Naive thymus-derived CD4-positive, alpha-beta T cell (primary cell): ENCODE measurements at regions of chr2 and their contacts with region 1.

Region 1: DNA sequence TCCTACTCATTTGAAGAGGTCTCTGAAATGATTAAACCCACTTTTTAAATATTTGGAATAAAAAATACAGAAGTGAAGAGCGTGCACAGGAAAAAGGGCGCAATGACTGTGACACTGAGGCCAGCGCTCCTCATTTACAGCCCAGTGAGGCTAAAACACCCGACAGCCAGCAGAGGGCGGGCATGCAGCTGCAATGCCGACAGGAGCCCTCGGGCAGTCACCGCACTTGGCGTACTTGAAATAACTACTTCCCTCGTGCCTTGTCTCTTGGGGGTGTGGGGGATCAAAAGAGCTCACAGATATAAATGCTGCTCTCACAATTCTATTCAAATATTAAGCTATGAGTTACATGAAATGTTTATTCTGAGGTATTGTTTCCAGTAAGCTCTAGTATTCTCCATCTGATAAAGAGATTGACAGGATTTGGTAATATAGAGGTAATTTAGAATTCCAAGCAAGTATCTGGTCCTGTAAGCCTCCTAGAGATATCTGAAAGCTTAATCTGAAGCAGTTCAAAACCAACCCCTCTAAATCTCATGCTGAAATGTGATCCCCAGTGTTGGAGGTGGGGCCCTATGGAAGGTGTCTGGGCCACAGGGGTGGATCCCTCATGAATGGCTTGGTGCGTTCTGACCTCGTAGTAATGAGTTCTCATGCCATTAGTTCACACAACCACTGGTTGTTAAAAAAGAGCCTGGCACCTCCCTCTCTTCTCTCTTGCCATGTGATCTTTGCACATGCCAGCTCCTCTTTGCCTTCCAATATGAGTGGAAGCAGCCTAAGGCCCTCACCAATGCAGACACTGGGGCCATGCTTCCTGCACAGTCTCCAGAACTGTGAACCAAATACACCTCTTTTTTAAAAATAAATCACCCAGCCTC is 93.6 kb downstream of the ZAP70 start:
- DNase-seq: peak; percentile 48 to 75 (median 69)
- ATAC-seq: peak; percentile 97
- H3K4me3 ChIP-seq: no peak overlapping the region
- H3K4me3 Mint-ChIP-seq: no peak overlapping the region
- H3K27ac ChIP-seq: no peak overlapping the region
- H3K27ac Mint-ChIP-seq: no peak overlapping the region
- H3K4me1 ChIP-seq: peaks cover 0 to 6% of the 10 kb centered on the region in 2 donors
- H3K4me1 Mint-ChIP-seq: peaks cover 0 to 8% (median 0%) of the 10 kb centered on the region in 7 donors
- H3K27me3 ChIP-seq: no peaks in the 10 kb centered on the region
- H3K27me3 Mint-ChIP-seq: no peaks in the 10 kb centered on the region

Region 2: DNA sequence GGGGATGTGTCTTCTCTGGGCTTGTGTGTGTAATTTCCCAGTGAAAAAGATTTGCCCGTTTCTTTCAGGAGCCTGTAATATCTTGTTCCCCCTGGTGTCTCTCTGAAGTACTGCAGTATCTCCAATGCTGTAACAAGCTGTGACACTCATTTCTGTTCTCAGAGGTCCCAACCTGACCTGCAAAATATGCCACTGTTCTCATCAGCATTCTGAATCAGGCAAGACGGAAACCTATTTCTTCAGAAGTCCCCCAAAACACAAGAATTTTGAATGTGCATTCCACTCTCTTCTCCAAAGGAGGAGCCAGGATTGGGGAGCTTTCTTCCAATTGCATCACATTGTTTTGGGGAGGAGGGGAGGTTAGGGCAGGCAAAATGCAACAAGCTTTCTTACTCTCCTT is 462.3 kb after region 1 on chr2:
- CTCF ChIA-PET with region 1: interaction called, 3 read pairs
- POLR2A ChIA-PET with region 1: no interaction called
- intact Hi-C with region 1: loop called in 1 of 2 experiments (anchors 1 kb)
- DNase-seq: peak in 1 of 9 donors; percentile 5
- ATAC-seq: peak; percentile 55
- H3K4me3 ChIP-seq: no peak overlapping the region
- H3K4me3 Mint-ChIP-seq: no peak overlapping the region
- H3K27ac ChIP-seq: no peak overlapping the region
- H3K27ac Mint-ChIP-seq: no peak overlapping the region
- H3K4me1 ChIP-seq: no peaks in the 10 kb centered on the region
- H3K4me1 Mint-ChIP-seq: no peaks in the 10 kb centered on the region
- H3K27me3 ChIP-seq: no peaks in the 10 kb centered on the region
- H3K27me3 Mint-ChIP-seq: peaks cover 0 to 46% (median 4%) of the 10 kb centered on the region in 5 donors

Region 3: DNA sequence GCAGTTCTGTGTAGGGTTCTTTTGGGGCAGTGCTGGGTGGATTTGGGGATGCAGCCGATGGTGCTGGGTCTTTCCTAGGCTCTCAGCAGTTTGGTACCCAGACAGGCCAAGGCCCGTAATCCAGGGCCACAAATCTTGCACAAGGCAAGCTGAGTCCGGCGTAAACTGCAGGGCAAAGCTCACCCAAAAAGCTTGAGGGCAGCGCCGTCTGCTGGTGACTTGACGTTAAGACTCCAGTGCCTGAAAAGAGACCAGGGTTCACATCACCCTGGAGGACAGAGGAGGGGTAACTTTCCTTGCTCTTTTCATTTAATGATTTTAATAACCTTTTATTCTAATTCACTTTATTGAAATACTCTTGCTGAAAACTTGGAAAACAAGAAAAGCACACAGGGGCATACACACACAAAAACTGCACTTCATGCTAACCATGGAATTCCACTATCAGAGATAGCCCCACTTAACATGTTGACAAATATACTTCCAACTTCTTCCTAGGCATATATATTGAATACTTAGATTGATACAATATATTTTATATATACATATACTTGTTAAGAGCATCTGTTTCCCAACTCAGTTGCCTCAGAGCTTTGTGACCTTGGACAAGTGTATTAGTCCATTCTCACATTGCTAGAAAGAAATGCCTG is 578.2 kb after region 1 on chr2:
- CTCF ChIA-PET with region 1: interaction called, 21 read pairs
- POLR2A ChIA-PET with region 1: interaction called, 3 read pairs
- intact Hi-C with region 1: loop called (anchors 1 kb)
- DNase-seq: peak; percentile 32 to 70 (median 53)
- ATAC-seq: peak; percentile 88
- H3K4me3 ChIP-seq: no peak overlapping the region
- H3K4me3 Mint-ChIP-seq: no peak overlapping the region
- H3K27ac ChIP-seq: no peak overlapping the region
- H3K27ac Mint-ChIP-seq: peak overlapping the region in 1 of 9 donors; percentile 25
- H3K4me1 ChIP-seq: no peaks in the 10 kb centered on the region
- H3K4me1 Mint-ChIP-seq: peaks cover 0 to 4% (median 0%) of the 10 kb centered on the region in 7 donors
- H3K27me3 ChIP-seq: no peaks in the 10 kb centered on the region
- H3K27me3 Mint-ChIP-seq: peaks cover 3 to 13% (median 4%) of the 10 kb centered on the region in 5 donors

Region 4: DNA sequence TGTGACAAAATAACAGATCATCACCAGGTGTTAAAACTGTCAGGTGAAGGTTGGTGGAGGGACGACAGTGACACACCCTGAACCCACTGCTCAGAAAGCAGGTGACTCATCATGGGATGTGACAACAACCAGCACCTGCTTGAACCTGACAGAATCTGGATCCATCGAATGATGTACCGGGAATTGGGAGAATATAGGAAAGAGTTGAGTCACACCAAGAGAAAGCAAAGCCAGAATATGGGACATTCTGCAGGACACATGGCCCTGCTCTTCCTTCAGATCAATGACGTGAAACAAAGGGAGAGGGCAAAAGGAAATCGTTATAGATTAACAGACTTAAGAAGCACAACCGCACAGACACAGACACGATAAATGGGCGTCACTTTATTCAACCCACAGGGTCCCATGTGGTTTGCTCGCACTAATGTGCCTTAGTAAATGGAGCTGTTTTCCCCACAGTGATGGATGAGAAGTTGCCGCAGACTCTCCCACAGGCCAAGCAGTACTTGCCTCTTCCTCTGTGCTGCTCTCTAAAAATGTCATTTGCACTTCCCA is 1028.9 kb after region 1 on chr2:
- CTCF ChIA-PET with region 1: no interaction called
- POLR2A ChIA-PET with region 1: no interaction called
- intact Hi-C with region 1: loop called in 1 of 2 experiments (anchors 1 kb)
- DNase-seq: peak in 7 of 9 donors; percentile 55 to 78 (median 72)
- ATAC-seq: peak; percentile 87
- H3K4me3 ChIP-seq: peak overlapping the region; percentile 1
- H3K4me3 Mint-ChIP-seq: peak overlapping the region; percentile 32 to 79 (median 52)
- H3K27ac ChIP-seq: peak overlapping the region; percentile 66
- H3K27ac Mint-ChIP-seq: peak overlapping the region; percentile 78 to 98 (median 88)
- H3K4me1 ChIP-seq: peaks cover 16 to 43% of the 10 kb centered on the region in 2 donors
- H3K4me1 Mint-ChIP-seq: peaks cover 24 to 51% (median 28%) of the 10 kb centered on the region in 7 donors
- H3K27me3 ChIP-seq: no peaks in the 10 kb centered on the region
- H3K27me3 Mint-ChIP-seq: peaks cover 0 to 17% (median 0%) of the 10 kb centered on the region in 5 donors